ENCODE measurements at regions of chr18 and their contacts with region 1.

Region 1: DNA sequence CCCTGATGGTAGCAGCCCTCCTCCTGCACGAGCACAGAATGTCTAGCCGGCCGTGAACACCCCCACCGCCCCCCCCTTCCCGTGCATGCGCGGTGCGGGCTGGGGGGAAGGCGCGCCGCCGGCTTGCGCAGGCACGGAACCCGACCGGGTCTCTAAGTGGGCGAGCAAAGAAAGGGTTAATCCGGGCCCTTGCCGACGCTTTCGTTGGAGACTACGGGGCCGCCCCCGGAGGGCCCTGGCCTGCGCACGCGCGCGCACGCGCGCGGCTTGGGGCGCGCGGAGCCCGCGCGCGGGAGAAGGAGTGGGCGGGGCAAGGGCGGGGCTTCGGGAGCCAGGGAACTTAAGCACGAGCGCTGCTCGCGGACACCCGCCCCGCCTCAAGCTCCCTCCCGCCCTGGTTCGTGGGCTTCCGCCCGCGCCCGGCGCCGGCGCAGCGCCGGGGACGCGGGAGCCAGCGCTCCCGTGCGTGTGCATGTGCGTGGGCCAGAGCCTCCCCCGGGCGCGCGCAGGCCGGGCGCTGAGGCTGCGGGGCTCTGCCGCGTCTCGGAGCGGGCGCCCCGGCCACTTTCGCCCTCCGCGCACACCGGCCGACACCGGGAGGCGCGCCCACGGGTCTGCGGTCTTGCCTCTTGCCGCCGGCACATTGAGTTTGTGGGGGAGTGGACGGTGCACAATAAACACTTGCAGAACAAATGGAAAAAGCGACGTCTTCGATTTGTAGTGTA is 617 bp upstream of the ZBTB14 start:
- DNase-seq: peak; percentile 90 to 96 (median 95)
- ATAC-seq: peak; percentile 80
- H3K4me3 ChIP-seq: peak overlapping the region; percentile 76
- H3K4me3 Mint-ChIP-seq: peak overlapping the region; percentile 87 to 98 (median 94)
- H3K27ac ChIP-seq: peak overlapping the region; percentile 87
- H3K27ac Mint-ChIP-seq: peak overlapping the region; percentile 86 to 99 (median 97)
- H3K4me1 ChIP-seq: peaks cover 24 to 37% of the 10 kb centered on the region in 2 donors
- H3K4me1 Mint-ChIP-seq: peaks cover 4 to 48% (median 42%) of the 10 kb centered on the region in 7 donors
- H3K27me3 ChIP-seq: no peaks in the 10 kb centered on the region
- H3K27me3 Mint-ChIP-seq: peaks cover 0 to 18% (median 1%) of the 10 kb centered on the region in 5 donors

Region 2: DNA sequence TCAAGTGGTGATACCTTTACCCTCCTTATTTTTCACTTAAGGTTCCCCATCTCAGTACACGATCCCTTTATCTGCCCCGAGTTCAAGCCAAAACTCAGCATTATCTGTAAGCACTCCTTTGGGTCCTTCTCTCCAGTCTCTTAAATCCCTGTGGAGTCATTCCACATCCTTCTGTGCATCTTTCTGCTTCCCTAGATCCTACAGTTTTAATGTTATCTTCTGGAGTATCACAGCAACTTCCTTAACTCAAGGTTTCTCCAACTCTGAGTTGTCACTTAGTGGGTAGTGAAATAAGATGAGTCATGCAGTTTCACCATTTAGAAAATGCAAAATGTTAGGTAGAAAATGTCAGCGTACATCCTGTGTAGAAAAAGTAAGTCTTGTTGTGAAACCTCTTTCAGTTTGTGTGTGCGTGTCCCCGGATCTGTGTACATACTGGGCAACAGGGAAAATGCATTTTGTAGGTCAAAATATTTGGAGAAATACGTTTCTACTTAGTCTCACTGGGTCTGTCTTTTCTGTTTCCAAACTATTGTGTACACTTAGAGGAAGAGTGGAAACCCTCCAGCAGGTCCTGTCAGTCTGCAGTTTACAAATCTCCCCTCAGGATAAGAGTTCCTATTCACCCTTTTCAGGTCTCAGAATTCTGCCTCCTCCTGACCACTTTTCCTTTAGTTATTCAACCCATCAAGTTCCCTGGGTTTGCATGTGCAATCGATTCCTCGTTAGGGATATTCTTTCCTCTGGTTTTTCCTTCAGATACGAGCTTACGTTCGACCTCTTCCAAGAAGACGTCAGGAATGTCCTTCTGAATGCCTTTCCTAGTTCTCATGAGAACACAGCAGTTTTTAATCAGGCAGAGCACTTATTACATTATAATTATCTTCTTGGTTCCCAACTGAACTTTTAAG is 1691.4 kb before region 1 on chr18:
- CTCF ChIA-PET with region 1: no interaction called
- POLR2A ChIA-PET with region 1: no interaction called
- intact Hi-C with region 1: loop called in 1 of 2 experiments (anchors 10 kb)
- DNase-seq: peak in 6 of 9 donors; percentile 20 to 55 (median 48)
- ATAC-seq: peak; percentile 71
- H3K4me3 ChIP-seq: peak overlapping the region; percentile 43
- H3K4me3 Mint-ChIP-seq: no peak overlapping the region
- H3K27ac ChIP-seq: peak overlapping the region; percentile 52
- H3K27ac Mint-ChIP-seq: no peak overlapping the region
- H3K4me1 ChIP-seq: peaks cover 32 to 38% of the 10 kb centered on the region in 2 donors
- H3K4me1 Mint-ChIP-seq: peaks cover 0 to 27% (median 7%) of the 10 kb centered on the region in 7 donors
- H3K27me3 ChIP-seq: no peaks in the 10 kb centered on the region
- H3K27me3 Mint-ChIP-seq: no peaks in the 10 kb centered on the region

Region 3: GRCh38 chr18:5106730-5107129 is 189.4 kb before region 1 on chr18:
- CTCF ChIA-PET with region 1: interaction called, 3 read pairs
- POLR2A ChIA-PET with region 1: interaction called, 3 read pairs
- intact Hi-C with region 1: loop called in 1 of 2 experiments (anchors 2 kb)
- DNase-seq: peak in 6 of 9 donors; percentile 21 to 56 (median 39)
- ATAC-seq: peak; percentile 57
- H3K4me3 ChIP-seq: no peak overlapping the region
- H3K4me3 Mint-ChIP-seq: peak overlapping the region in 1 of 10 donors; percentile 35
- H3K27ac ChIP-seq: no peak overlapping the region
- H3K27ac Mint-ChIP-seq: peak overlapping the region in 2 of 9 donors; percentile 41 to 45
- H3K4me1 ChIP-seq: no peaks in the 10 kb centered on the region
- H3K4me1 Mint-ChIP-seq: peaks cover 0 to 15% (median 7%) of the 10 kb centered on the region in 7 donors
- H3K27me3 ChIP-seq: no peaks in the 10 kb centered on the region
- H3K27me3 Mint-ChIP-seq: no peaks in the 10 kb centered on the region

Region 4: GRCh38 chr18:5237723-5238370 is 58.3 kb before region 1 on chr18:
- CTCF ChIA-PET with region 1: interaction called, 23 read pairs
- POLR2A ChIA-PET with region 1: interaction called, 267 read pairs
- intact Hi-C with region 1: loop called (anchors 1 kb)
- DNase-seq: peak; percentile 81 to 97 (median 92)
- ATAC-seq: peak; percentile 93
- H3K4me3 ChIP-seq: peak overlapping the region; percentile 89
- H3K4me3 Mint-ChIP-seq: peak overlapping the region; percentile 93 to 98 (median 96)
- H3K27ac ChIP-seq: peak overlapping the region; percentile 90
- H3K27ac Mint-ChIP-seq: peak overlapping the region; percentile 97 to 99 (median 98)
- H3K4me1 ChIP-seq: peaks cover 13 to 16% of the 10 kb centered on the region in 2 donors
- H3K4me1 Mint-ChIP-seq: peaks cover 16 to 76% (median 45%) of the 10 kb centered on the region in 7 donors
- H3K27me3 ChIP-seq: no peaks in the 10 kb centered on the region
- H3K27me3 Mint-ChIP-seq: peaks cover 0 to 7% (median 0%) of the 10 kb centered on the region in 5 donors

Region 5: GRCh38 chr18:5309888-5310470 is 13.8 kb after region 1 on chr18:
- CTCF ChIA-PET with region 1: interaction called, 4 read pairs
- POLR2A ChIA-PET with region 1: interaction called, 120 read pairs
- intact Hi-C with region 1: loop called (anchors 1 kb)
- DNase-seq: peak in 7 of 9 donors; percentile 32 to 67 (median 57)
- ATAC-seq: peak; percentile 92
- H3K4me3 ChIP-seq: peak overlapping the region; percentile 58
- H3K4me3 Mint-ChIP-seq: peak overlapping the region; percentile 71 to 93 (median 85)
- H3K27ac ChIP-seq: peak overlapping the region; percentile 60
- H3K27ac Mint-ChIP-seq: peak overlapping the region; percentile 80 to 97 (median 92)
- H3K4me1 ChIP-seq: peaks cover 7 to 10% of the 10 kb centered on the region in 2 donors
- H3K4me1 Mint-ChIP-seq: peaks cover 16 to 40% (median 32%) of the 10 kb centered on the region in 7 donors
- H3K27me3 ChIP-seq: no peaks in the 10 kb centered on the region
- H3K27me3 Mint-ChIP-seq: peaks cover 0 to 2% (median 0%) of the 10 kb centered on the region in 5 donors

Region 6: GRCh38 chr18:5456577-5457463 is 160.7 kb after region 1 on chr18:
- CTCF ChIA-PET with region 1: no interaction called
- POLR2A ChIA-PET with region 1: interaction called, 14 read pairs
- intact Hi-C with region 1: loop called in 1 of 2 experiments (anchors 10 kb)
- DNase-seq: peak in 6 of 9 donors; percentile 10 to 50 (median 33)
- ATAC-seq: peak; percentile 86
- H3K4me3 ChIP-seq: no peak overlapping the region
- H3K4me3 Mint-ChIP-seq: peak overlapping the region in 9 of 10 donors; percentile 63 to 87 (median 73)
- H3K27ac ChIP-seq: peak overlapping the region; percentile 66
- H3K27ac Mint-ChIP-seq: peak overlapping the region in 8 of 9 donors; percentile 82 to 97 (median 86)
- H3K4me1 ChIP-seq: peaks cover 0 to 3% of the 10 kb centered on the region in 2 donors
- H3K4me1 Mint-ChIP-seq: peaks cover 0 to 35% (median 25%) of the 10 kb centered on the region in 7 donors
- H3K27me3 ChIP-seq: no peaks in the 10 kb centered on the region
- H3K27me3 Mint-ChIP-seq: peaks cover 0 to 5% (median 0%) of the 10 kb centered on the region in 5 donors